ENCODE measurements at regions of chr17 and their contacts with region 1.

Region 1: GRCh38 chr17:56230660-56231059 is 77.4 kb downstream of the ANKFN1 start:
- DNase-seq: no peak
- ATAC-seq: no peak
- H3K4me3 ChIP-seq: no peak overlapping the region
- H3K27ac ChIP-seq: no peak overlapping the region
- H3K4me1 ChIP-seq: no peaks in the 10 kb centered on the region
- H3K27me3 ChIP-seq: no peaks in the 10 kb centered on the region
- CTCF ChIP-seq: no peak

Region 2: DNA sequence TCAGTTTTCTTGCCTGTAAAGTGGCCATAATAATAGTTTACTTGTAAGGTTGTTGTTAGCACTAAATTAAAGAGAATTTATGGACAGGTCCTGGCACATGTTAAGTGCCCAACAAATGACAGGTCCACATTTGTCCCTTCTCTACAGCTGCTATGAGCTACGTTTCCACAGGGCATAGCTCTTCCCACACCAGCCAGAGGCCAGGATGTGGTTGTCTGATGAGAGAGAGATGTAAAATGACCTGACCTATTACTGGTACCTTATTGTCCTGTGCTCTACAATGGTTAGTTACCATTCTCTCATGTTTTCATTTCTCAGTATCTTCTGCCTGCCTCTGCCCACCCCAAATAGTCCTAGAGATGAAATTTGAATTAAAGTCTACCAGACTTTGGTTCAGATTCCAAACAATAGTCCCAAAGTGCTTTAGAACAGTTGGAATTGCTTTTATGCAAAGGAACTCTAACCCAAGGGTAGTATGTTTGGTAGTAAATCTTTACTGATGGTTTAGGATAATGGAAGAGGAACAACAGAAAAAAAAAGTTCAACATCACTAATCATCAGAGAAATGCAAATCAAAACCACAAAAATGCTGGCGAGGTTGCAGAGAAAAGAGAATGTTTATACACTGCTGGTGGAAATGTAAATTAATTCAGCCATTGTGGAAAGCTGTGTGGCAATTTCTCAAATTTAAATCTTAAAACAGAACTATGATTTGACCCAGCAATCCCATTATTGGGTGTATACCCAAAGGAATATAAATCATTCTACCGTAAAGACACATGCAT is 134.4 kb before region 1 on chr17:
- CTCF ChIA-PET with region 1: interaction called, 10 read pairs
- POLR2A ChIA-PET with region 1: no interaction called
- in situ Hi-C with region 1: no loop called
- intact Hi-C with region 1: no loop called
- DNase-seq: no peak
- ATAC-seq: no peak
- H3K4me3 ChIP-seq: no peak overlapping the region
- H3K27ac ChIP-seq: no peak overlapping the region
- H3K4me1 ChIP-seq: no peaks in the 10 kb centered on the region
- H3K27me3 ChIP-seq: no peaks in the 10 kb centered on the region
- CTCF ChIP-seq: no peak

Region 3: DNA sequence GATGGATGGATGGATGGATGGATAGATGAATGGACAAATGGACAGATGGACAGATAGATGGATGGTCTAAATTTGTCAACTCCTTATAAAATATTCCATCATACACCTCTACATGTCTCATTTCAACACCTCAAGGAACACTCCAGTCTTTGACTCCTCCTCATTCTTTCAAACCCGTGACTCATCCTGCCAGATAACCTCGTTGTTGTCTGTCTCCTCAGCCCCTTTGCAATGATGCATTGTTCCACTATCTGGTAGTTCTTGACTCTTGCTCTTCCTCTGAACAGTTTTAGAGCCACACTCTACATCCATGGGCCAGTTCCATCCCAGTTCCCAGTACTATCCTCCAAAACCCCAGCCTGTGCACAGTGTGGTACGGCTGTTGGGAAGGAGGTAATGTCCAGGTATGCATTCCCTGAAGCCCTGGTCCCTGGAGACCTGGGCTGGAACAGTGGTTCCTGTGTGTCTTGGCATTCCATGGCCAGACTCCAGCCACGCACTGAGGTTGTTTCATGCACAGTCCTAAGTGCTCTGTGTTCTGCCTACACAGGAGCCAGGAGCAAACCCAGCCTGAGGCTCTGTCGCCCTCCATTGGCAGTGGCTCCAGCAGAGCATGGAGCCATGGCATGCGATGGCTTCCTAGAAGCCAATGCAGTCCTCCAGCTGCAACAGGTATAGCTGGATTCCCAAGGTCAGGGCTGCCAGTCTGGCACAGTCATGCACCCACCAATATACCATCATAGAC is 497.4 kb after region 1 on chr17:
- CTCF ChIA-PET with region 1: no interaction called
- POLR2A ChIA-PET with region 1: no interaction called
- in situ Hi-C with region 1: no loop called
- intact Hi-C with region 1: no loop called
- DNase-seq: no peak
- ATAC-seq: peak; percentile 58; the same call in 1 of the 2 replicates
- H3K4me3 ChIP-seq: no peak overlapping the region
- H3K27ac ChIP-seq: no peak overlapping the region
- H3K4me1 ChIP-seq: no peaks in the 10 kb centered on the region
- H3K27me3 ChIP-seq: no peaks in the 10 kb centered on the region
- CTCF ChIP-seq: no peak